K562 (cell line): ENCODE measurements at regions of chr6 and their contacts with region 1.

Region 1: GRCh38 chr6:105793130-105793529 is 293.0 kb upstream of the PRDM1 start:
- DNase-seq: peak in 2 of 4 experiments; percentile 36 to 52
- ATAC-seq: peak; percentile 88
- H3K4me3 ChIP-seq: no peak overlapping the region
- H3K27ac ChIP-seq: no peak overlapping the region
- H3K4me1 ChIP-seq: peaks cover 0 to 4% of the 10 kb centered on the region in 2 experiments; a peak in 2 of 5 replicates
- H3K27me3 ChIP-seq: no peaks in the 10 kb centered on the region
- CTCF ChIP-seq: peak; percentile 41 to 70 (median 54)
- EP300 ChIP-seq: no peak
- POLR2A ChIP-seq: no peak
- RAD21 ChIP-seq: peak; percentile 80 to 87

Region 2: GRCh38 chr6:105691081-105691480 is 102.0 kb before region 1 on chr6:
- CTCF ChIA-PET with region 1: no interaction called
- POLR2A ChIA-PET with region 1: no interaction called
- in situ Hi-C with region 1: no loop called
- intact Hi-C with region 1: no loop called
- DNase-seq: no peak
- ATAC-seq: no peak
- H3K4me3 ChIP-seq: no peak overlapping the region
- H3K27ac ChIP-seq: no peak overlapping the region
- H3K4me1 ChIP-seq: no peaks in the 10 kb centered on the region
- H3K27me3 ChIP-seq: no peaks in the 10 kb centered on the region
- CTCF ChIP-seq: no peak
- EP300 ChIP-seq: no peak
- POLR2A ChIP-seq: no peak
- RAD21 ChIP-seq: no peak

Region 3: GRCh38 chr6:105835373-105835772 is 42.2 kb after region 1 on chr6:
- CTCF ChIA-PET with region 1: no interaction called
- POLR2A ChIA-PET with region 1: no interaction called
- in situ Hi-C with region 1: no loop called
- intact Hi-C with region 1: loop called (anchors 1 kb)
- DNase-seq: peak; percentile 40 to 79 (median 62)
- ATAC-seq: peak; percentile 97
- H3K4me3 ChIP-seq: no peak overlapping the region
- H3K27ac ChIP-seq: no peak overlapping the region
- H3K4me1 ChIP-seq: peaks cover 0 to 16% of the 10 kb centered on the region in 2 experiments; a peak in 3 of 5 replicates
- H3K27me3 ChIP-seq: no peaks in the 10 kb centered on the region
- CTCF ChIP-seq: peak; percentile 73 to 80 (median 79)
- EP300 ChIP-seq: peak; percentile 39; the same call in 1 of the 2 replicates
- POLR2A ChIP-seq: no peak
- RAD21 ChIP-seq: peak; percentile 75 to 87